Lower leg skin (tissue), 4 donors: ENCODE measurements at regions of chr16 and their contacts with region 1.

Region 1: GRCh38 chr16:23432176-23433128 is 20.5 kb downstream of the COG7 start:
- DNase-seq: no peak
- H3K4me3 ChIP-seq: no peak overlapping the region
- CTCF ChIP-seq: no peak
- POLR2A ChIP-seq: no peak

Region 2: GRCh38 chr16:23182460-23183309 is 249.8 kb before region 1 on chr16 and contains the start of gene SCNN1G:
- intact Hi-C with region 1: loop called (anchors 2 kb)
- DNase-seq: peak; percentile 65 to 94
- H3K4me3 ChIP-seq: peak within 1 kb of the TSS; percentile 41
- CTCF ChIP-seq: peak in 2 of 3 donors; percentile 31 to 42
- POLR2A ChIP-seq: no peak
- total RNA-seq, gene SCNN1G: 5.8 to 39.3 (median 15.2) TPM

Region 3: DNA sequence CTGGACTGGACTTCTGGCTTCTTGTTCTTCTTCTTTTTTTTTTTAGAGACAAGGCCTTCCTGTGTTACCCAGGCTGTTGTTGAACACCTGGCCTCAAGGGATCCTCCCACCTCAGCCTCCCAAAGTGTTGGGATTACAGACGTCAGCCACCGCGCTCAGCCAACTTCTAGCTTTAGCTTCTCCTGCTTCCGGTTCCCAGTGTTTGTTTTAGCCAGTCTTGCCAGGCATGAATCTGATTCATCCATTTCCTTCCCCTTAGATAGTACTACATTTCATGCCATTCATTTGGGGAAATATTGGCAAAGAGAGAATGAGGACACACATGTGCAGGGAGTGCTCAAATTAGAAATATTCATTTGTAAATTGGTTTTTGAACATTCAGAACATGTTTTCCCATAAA is 175.7 kb after region 1 on chr16:
- intact Hi-C with region 1: no loop called
- DNase-seq: no peak
- H3K4me3 ChIP-seq: no peak overlapping the region
- CTCF ChIP-seq: no peak
- POLR2A ChIP-seq: no peak